ENCODE measurements at regions of chr11 and their contacts with region 1.

Region 1: GRCh38 chr11:128215238-128215882 is 372.0 kb downstream of the ETS1 start:
- DNase-seq: no peak
- ATAC-seq: no peak
- H3K4me3 ChIP-seq: no peak overlapping the region
- H3K4me3 Mint-ChIP-seq: no peak overlapping the region
- H3K27ac ChIP-seq: no peak overlapping the region
- H3K27ac Mint-ChIP-seq: no peak overlapping the region
- H3K4me1 ChIP-seq: no peaks in the 10 kb centered on the region
- H3K4me1 Mint-ChIP-seq: peaks cover 0 to 12% (median 0%) of the 10 kb centered on the region in 7 donors
- H3K27me3 ChIP-seq: no peaks in the 10 kb centered on the region
- H3K27me3 Mint-ChIP-seq: no peaks in the 10 kb centered on the region

Region 2: GRCh38 chr11:128259816-128260215 is 44.5 kb after region 1 on chr11:
- CTCF ChIA-PET with region 1: no interaction called
- POLR2A ChIA-PET with region 1: no interaction called
- intact Hi-C with region 1: loop called in 1 of 2 experiments (anchors 5 kb)
- DNase-seq: no peak
- ATAC-seq: no peak
- H3K4me3 ChIP-seq: no peak overlapping the region
- H3K4me3 Mint-ChIP-seq: no peak overlapping the region
- H3K27ac ChIP-seq: no peak overlapping the region
- H3K27ac Mint-ChIP-seq: no peak overlapping the region
- H3K4me1 ChIP-seq: no peaks in the 10 kb centered on the region
- H3K4me1 Mint-ChIP-seq: peaks cover 0 to 8% (median 0%) of the 10 kb centered on the region in 7 donors
- H3K27me3 ChIP-seq: no peaks in the 10 kb centered on the region
- H3K27me3 Mint-ChIP-seq: peaks cover 0 to 13% (median 0%) of the 10 kb centered on the region in 5 donors

Region 3: DNA sequence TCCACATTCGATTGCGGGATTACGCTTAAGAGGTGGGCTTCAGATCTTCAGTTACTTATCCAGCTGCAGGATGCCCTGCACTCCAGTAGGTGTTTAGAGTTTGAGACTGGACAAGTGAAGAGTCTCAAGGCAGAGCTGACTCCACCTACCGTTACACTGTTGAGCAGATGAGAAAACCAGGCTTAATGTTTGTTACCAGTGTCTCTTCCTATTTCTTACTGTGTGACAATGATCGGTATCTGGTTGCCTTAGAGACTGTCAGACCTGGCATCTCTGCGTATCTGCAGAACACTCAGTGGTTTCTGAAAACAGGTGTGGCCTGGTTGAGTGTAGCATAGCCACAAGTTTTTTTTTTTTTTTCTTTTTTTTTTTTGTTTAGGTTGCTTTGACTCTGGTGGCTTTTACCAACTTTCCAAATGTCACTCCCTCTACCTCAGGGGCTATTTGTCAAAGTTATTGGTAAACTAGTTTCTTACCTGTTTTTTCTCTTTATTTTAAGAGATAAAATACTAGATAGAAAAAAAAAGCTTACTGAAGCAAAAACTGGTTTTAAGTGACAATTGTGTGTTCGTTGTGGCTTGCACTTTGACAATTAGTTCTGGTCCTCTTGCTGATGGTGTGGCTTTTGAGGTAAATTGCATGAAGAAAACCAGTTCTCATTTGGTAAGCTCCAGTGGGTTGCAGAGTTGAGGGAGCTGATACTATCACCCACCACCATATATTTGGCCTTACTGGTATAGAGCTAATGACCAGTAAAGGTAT is 87.2 kb after region 1 on chr11:
- CTCF ChIA-PET with region 1: no interaction called
- POLR2A ChIA-PET with region 1: no interaction called
- intact Hi-C with region 1: no loop called
- DNase-seq: peak; percentile 39 to 97 (median 92)
- ATAC-seq: peak; percentile 92
- H3K4me3 ChIP-seq: peak overlapping the region; percentile 52
- H3K4me3 Mint-ChIP-seq: peak overlapping the region; percentile 81 to 98 (median 93)
- H3K27ac ChIP-seq: peak overlapping the region; percentile 98
- H3K27ac Mint-ChIP-seq: peak overlapping the region; percentile 93 to 100 (median 98)
- H3K4me1 ChIP-seq: peaks cover 83 to 95% of the 10 kb centered on the region in 2 donors
- H3K4me1 Mint-ChIP-seq: peaks cover 52 to 92% (median 88%) of the 10 kb centered on the region in 7 donors
- H3K27me3 ChIP-seq: no peaks in the 10 kb centered on the region
- H3K27me3 Mint-ChIP-seq: no peaks in the 10 kb centered on the region

Measured in naive thymus-derived CD4-positive, alpha-beta T cell (primary cell).